Colonic mucosa (tissue), 4 donors: ENCODE measurements at regions of chr2 and their contacts with region 1.

Region 1: GRCh38 chr2:105114551-105114950 is 76.7 kb downstream of the MRPS9 start:
- DNase-seq: no peak
- H3K4me3 ChIP-seq: no peak overlapping the region
- H3K27ac ChIP-seq: no peak overlapping the region
- H3K4me1 ChIP-seq: no peaks in the 10 kb centered on the region
- H3K27me3 ChIP-seq: no peaks in the 10 kb centered on the region
- CTCF ChIP-seq: peak; percentile 76

Region 2: DNA sequence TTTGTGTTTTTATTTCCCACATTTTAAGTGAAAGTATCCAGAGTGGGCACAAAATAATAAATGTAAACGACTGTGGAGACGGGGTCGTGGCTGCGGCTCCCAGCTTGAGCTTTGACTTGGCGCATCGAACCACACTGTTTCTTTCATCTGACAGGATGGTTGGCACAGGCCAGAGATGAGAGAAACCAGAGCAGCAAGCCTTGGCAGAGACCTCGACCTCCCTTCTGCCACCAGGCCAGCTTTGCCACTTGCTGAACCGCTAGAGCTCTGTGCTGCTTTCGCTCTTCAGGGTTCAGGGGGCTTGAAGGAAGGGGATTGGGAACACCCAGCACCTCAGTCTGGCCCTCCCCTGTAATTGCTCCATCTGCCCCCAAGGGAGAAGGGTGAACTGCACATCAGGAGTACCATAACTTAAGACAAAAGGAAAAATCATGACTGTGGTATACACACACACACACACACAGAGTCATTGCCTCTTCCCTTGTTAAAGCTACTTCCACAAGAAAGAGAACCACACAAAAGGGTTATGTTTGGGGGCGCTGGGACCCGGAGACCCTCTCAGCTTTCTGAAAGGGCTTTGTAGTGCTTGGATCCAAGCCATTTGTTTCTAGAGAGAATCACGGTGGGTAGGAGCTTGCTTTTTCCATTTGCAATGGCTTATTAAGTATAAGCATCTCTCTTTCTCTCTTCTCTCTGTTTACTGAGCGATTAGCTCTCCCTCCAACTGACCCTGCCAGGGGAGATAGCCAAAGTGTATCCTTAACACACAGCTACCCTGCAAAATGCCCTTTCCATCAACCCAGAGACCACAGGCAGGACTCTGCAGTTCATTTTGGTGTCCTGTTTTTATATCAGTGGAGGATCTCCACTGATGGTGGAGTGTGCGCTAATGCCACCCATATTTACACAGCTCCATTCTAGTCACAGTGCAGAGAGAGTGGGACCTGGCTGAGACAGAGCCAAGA is 237.7 kb before region 1 on chr2:
- intact Hi-C with region 1: no loop called
- DNase-seq: no peak
- H3K4me3 ChIP-seq: no peak overlapping the region
- H3K27ac ChIP-seq: no peak overlapping the region
- H3K4me1 ChIP-seq: no peaks in the 10 kb centered on the region
- H3K27me3 ChIP-seq: peaks cover 11% of the 10 kb centered on the region
- CTCF ChIP-seq: no peak

Region 3: DNA sequence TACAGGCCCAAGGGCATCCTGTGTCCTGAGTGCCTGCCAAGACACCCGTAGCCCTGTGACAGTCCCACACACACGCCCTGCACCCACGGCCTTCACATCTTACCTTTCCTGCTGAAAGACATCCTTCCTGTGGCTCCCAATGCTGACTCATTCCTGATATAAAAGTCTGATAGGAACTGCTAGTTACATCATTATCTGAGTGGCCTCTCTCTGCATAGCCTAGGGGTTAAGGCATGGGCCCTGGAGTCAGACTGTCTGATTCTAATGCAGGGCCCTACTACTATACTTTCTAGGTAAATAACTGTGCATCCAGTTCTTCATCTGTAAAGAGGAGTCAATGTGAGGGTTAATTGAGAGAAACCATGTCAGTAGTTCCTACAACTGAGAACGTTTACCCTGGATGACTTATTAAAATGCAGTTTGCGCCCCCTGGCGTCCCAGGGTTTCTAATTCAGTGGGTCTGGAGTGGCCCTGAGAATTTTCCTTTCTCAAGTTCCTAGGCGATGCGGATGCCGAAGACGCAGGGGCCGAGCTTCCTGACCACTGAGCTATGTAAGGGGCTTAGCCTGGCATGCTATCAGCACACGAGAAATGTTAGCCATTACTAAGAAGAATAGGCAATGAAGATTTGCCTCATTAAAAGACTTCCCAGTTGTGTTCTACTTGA is 121.0 kb after region 1 on chr2:
- intact Hi-C with region 1: loop called (anchors 1 kb)
- DNase-seq: peak; percentile 84
- H3K4me3 ChIP-seq: no peak overlapping the region
- H3K27ac ChIP-seq: no peak overlapping the region
- H3K4me1 ChIP-seq: no peaks in the 10 kb centered on the region
- H3K27me3 ChIP-seq: no peaks in the 10 kb centered on the region
- CTCF ChIP-seq: peak; percentile 72